HepG2 (cell line): ENCODE measurements at regions of chr6 and their contacts with region 1.

Region 1: DNA sequence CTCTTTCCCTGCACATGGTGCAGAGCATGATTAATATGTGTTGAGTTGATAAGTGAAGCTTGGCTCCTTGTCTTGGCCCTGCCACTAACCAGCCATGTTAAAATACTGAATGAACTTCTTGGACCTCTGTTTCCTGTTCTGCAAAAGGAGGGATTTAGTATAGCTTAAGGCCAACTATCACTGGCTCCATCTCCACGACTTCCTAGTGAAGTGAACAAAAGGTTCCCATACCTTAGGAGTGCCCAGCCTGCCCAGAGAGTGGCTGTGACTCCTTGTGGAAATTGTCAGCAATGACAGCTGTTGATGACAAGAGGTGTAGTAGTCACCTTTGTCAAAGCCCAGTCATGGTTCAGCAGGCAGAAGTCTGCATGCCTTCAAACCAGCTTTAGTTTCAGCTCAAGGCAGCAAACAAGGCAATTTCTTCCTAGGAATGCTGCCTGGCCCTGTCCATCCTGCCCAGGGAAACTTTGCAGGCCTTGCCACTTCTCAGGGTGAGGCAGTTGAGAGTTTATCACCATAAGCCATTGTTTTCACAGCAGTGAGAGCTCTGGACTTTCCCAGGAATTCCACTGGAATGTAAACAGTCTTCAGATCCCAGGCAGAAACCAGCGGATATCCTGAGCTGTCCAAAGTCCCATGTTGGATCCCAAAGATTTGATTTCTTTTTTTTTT is 169.7 kb upstream of the TNFAIP3 start:
- DNase-seq: peak; percentile 94
- ATAC-seq: peak; percentile 96
- H3K4me3 ChIP-seq: peak overlapping the region in 1 of 3 experiments; percentile 8; a peak in 1 of 6 replicates
- H3K27ac ChIP-seq: peak overlapping the region; percentile 66
- H3K4me1 ChIP-seq: peaks cover 90% of the 10 kb centered on the region
- H3K27me3 ChIP-seq: no peaks in the 10 kb centered on the region
- CTCF ChIP-seq: peak; percentile 67
- EP300 ChIP-seq: peak in 1 of 2 experiments; percentile 91; a peak in 2 of 4 replicates
- POLR2A ChIP-seq: no peak
- RAD21 ChIP-seq: peak; percentile 72

Region 2: DNA sequence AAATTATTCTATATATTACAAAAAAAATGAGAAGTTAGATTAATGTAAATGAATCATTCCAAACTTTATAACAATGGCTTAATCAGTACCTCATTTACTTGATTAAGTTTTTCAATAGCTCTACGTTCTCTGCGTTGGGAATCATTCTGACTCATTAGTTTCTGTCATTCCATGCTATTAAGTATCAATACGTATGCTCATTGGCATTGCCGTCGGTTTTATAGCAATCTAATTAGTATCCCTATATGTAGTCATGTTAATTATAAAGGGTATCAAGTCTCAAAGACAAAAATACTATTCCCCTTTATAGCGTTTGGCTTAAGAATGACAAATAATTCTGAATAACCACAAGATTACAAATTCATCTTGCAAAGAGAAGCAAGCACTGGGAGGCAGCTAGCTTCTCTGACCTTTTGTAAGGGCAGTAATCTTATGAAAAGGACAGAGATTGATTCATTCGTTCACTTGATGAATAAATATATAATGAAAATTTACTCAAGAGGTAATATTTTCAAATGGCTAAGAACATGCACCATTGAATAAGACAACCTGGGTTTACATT is 245.0 kb before region 1 on chr6:
- CTCF ChIA-PET with region 1: no interaction called
- POLR2A ChIA-PET with region 1: no interaction called
- in situ Hi-C with region 1: no loop called
- intact Hi-C with region 1: no loop called
- DNase-seq: no peak
- ATAC-seq: no peak
- H3K4me3 ChIP-seq: no peak overlapping the region
- H3K27ac ChIP-seq: no peak overlapping the region
- H3K4me1 ChIP-seq: no peaks in the 10 kb centered on the region
- H3K27me3 ChIP-seq: peaks cover 0 to 5% of the 10 kb centered on the region in 2 experiments; a peak in 1 of 5 replicates
- CTCF ChIP-seq: no peak
- EP300 ChIP-seq: no peak
- POLR2A ChIP-seq: no peak
- RAD21 ChIP-seq: no peak

Region 3: DNA sequence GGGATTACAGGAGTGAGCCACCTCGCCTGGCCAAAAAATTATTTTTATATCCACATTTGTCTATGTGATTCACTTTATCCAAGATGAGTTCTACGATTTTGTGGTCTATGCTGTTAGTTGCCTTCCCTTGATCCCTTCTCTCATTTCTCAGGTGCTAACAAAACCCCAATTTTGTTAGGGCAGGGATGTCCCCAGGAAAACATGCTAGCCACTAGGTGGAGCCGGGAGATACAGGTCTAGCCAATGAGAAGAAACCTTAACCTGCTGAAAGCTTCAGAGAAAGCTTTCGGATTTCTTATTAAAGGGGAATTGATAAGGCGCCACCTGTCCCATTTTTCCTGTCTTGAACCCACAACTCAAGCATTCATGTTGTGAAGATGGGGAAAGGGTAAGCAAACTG is 35.8 kb before region 1 on chr6:
- CTCF ChIA-PET with region 1: no interaction called
- POLR2A ChIA-PET with region 1: interaction called, 3 read pairs
- in situ Hi-C with region 1: no loop called
- intact Hi-C with region 1: loop called (anchors 1 kb)
- DNase-seq: peak; percentile 48
- ATAC-seq: peak; percentile 83
- H3K4me3 ChIP-seq: no peak overlapping the region
- H3K27ac ChIP-seq: no peak overlapping the region
- H3K4me1 ChIP-seq: peaks cover 54% of the 10 kb centered on the region
- H3K27me3 ChIP-seq: peaks cover 0 to 2% of the 10 kb centered on the region in 2 experiments; a peak in 2 of 5 replicates
- CTCF ChIP-seq: peak; percentile 71
- EP300 ChIP-seq: no peak
- POLR2A ChIP-seq: no peak
- RAD21 ChIP-seq: no peak